ENCODE measurements at regions of chr11 and their contacts with region 1.

Region 1: GRCh38 chr11:30914143-30914762 is 328.1 kb upstream of the MPPED2 start:
- DNase-seq: peak; percentile 73

Region 2: DNA sequence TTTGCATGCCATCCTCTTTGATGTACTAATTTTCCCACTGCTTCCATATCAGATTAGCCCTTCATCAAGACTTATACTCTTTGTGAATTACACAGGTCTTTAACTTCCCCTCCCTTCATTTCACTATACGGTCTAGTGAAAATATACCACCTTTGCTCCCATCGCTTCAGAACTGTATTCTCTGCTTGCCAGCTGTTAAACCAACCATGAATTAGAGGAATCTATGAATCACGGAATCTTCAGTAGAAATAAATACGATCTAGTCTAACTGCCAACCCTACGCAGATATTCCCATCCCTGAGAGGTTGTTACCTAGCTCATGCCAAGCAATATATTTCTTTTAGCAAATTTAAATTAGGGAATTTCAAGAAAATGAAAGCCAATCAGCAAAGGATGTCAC is 150.3 kb before region 1 on chr11:
- CTCF ChIA-PET with region 1: no interaction called
- POLR2A ChIA-PET with region 1: no interaction called
- DNase-seq: no peak

Region 3: DNA sequence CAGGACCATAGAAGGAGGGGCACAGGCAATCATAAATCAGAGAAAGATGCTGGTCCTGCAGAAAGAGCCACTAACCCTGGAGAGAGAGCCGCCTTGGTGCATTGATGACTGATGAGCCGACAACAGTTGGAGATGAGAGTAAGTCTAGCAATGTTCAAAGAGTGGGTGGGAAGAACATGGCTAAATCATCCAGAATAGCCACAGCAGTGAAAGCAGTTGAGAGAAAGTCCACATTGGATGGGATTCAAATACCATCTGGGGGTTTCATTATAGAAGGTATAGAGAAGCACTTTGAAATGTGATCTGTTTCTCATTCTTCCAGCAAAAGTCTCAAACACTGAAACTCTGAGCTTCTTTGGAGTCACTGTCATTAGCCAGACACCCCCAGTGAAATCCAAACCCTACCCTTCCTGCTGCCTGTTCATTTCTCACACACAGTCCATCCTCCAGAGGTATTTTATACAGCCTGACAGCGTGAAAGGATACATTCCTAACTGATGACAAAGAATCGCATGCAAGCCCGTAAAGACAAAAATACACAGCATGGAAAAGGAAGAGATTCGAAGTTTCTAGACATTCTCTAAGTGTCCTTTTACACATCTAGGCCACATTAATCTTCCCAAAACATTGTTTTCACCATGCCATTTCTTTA is 25.0 kb before region 1 on chr11:
- CTCF ChIA-PET with region 1: no interaction called
- POLR2A ChIA-PET with region 1: no interaction called
- DNase-seq: no peak

Region 4: DNA sequence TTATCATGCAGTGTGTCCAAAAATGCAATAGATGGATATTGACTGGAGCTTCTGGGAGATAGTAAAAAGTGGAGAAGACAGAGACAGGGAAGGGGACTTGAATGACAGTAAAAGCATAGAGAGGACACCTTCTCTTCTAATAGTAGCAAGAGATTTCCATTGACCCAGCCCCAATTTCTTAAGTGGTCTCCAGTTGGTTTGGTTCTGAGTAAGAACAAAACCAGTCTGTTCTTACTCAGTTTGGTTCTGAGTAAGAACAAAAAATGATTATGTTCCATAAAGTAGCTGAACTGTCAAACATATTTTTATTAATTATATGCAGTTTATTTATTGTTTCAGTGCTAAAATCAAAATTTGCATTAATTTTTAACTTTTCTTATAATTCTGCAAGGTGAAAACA is 11.3 kb before region 1 on chr11:
- CTCF ChIA-PET with region 1: interaction called, 11 read pairs
- POLR2A ChIA-PET with region 1: no interaction called
- DNase-seq: no peak

Measured in HEK293T (cell line).